PC-9 (cell line): ENCODE measurements at regions of chr1 and their contacts with region 1.

Region 1: DNA sequence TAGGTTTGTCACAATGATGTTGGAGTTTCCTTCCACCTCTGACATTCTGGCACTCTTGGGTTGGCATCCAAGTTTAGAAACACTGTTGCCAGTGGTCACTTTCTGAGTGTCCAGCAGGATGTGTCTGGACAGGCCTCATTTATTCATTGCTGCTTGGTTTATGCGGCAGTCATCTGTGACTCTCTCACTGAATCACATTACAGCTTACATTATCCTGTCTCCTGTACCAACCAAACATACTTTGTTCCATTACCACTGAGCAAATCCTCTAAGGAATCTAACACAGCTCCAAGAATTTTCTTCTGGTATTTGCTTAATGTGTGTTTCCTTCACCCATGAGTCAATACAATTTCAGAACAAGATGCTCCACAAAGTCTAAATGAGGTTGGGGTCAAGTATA is 19.9 kb downstream of the SGIP1 start:
- DNase-seq: no peak
- H3K4me3 ChIP-seq: no peak overlapping the region
- H3K27ac ChIP-seq: no peak overlapping the region
- H3K4me1 ChIP-seq: no peaks in the 10 kb centered on the region
- H3K27me3 ChIP-seq: no peaks in the 10 kb centered on the region
- CTCF ChIP-seq: no peak

Region 2: GRCh38 chr1:66571789-66572188 is 17.9 kb after region 1 on chr1:
- CTCF ChIA-PET with region 1: no interaction called
- POLR2A ChIA-PET with region 1: interaction called, 16 read pairs
- intact Hi-C with region 1: no loop called
- DNase-seq: peak in 1 of 2 experiments; percentile 57
- H3K4me3 ChIP-seq: no peak overlapping the region
- H3K27ac ChIP-seq: no peak overlapping the region
- H3K4me1 ChIP-seq: peaks cover 24% of the 10 kb centered on the region
- H3K27me3 ChIP-seq: no peaks in the 10 kb centered on the region
- CTCF ChIP-seq: no peak